MCF 10A (cell line): ENCODE measurements at regions of chr18 and their contacts with region 1.

Region 1: GRCh38 chr18:33231474-33232317 is 208.8 kb downstream of the CCDC178 start:
- DNase-seq: peak; percentile 81
- H3K4me3 Mint-ChIP-seq: no peak overlapping the region
- H3K27ac Mint-ChIP-seq: no peak overlapping the region
- H3K4me1 Mint-ChIP-seq: no peaks in the 10 kb centered on the region
- H3K27me3 Mint-ChIP-seq: peaks cover 13% of the 10 kb centered on the region
- CTCF ChIP-seq: peak; percentile 88

Region 2: DNA sequence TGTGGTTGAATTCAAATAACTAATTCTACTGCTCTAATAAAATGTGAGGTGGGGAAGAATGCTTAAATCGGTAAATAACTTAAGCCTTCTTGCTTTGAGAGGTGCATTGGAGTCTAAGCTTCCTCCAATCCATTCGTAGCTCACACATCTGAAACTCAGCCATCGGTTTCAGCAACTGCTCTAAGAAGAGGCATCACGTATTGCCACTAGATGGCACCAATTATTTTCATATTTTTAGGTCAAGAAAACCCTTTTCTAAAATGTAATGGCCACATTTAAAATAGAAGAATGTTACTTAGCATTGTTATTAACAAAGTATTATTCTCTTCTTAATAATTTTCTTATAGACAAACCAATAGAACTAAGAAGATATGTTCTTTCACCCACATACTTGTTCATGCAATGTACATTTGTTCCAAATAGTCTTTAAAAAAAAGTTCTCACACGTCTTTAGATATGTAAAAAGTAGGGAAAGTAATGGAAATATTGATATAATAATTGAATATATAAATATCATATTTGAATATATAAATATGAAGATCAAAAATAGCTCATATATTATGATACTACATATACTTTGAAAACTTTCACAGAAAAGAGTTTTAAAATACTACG is 21.0 kb before region 1 on chr18:
- CTCF ChIA-PET with region 1: interaction called, 27 read pairs
- POLR2A ChIA-PET with region 1: no interaction called
- intact Hi-C with region 1: no loop called
- DNase-seq: peak; percentile 45
- H3K4me3 Mint-ChIP-seq: no peak overlapping the region
- H3K27ac Mint-ChIP-seq: no peak overlapping the region
- H3K4me1 Mint-ChIP-seq: no peaks in the 10 kb centered on the region
- H3K27me3 Mint-ChIP-seq: peaks cover 60% of the 10 kb centered on the region
- CTCF ChIP-seq: peak; percentile 64

Region 3: GRCh38 chr18:33495278-33495677 is 263.6 kb after region 1 on chr18:
- CTCF ChIA-PET with region 1: interaction called, 4 read pairs
- POLR2A ChIA-PET with region 1: no interaction called
- intact Hi-C with region 1: loop called (anchors 1 kb)
- DNase-seq: peak; percentile 42
- H3K4me3 Mint-ChIP-seq: no peak overlapping the region
- H3K27ac Mint-ChIP-seq: no peak overlapping the region
- H3K4me1 Mint-ChIP-seq: no peaks in the 10 kb centered on the region
- H3K27me3 Mint-ChIP-seq: peaks cover 73% of the 10 kb centered on the region
- CTCF ChIP-seq: peak; percentile 27

Region 4: DNA sequence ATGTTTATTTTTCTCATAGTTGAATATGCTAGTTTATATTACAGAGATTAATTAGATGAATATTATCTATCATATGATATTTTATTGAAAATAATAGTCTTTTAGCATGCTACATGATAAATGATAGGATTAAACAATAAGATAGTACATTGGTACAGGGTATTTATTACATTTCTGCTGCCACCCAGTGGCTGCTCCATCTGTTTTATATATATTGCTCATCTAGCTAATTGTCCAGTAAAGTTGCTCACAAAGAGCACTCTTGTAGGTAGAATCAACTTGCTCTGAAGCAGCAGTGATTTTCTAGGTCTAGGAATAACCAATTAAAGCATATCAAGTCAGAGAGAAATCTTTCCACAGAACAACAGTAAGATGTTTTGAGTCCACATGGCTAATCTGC is 529.7 kb after region 1 on chr18:
- CTCF ChIA-PET with region 1: interaction called, 19 read pairs
- POLR2A ChIA-PET with region 1: no interaction called
- intact Hi-C with region 1: loop called (anchors 1 kb)
- DNase-seq: peak; percentile 22
- H3K4me3 Mint-ChIP-seq: no peak overlapping the region
- H3K27ac Mint-ChIP-seq: no peak overlapping the region
- H3K4me1 Mint-ChIP-seq: no peaks in the 10 kb centered on the region
- H3K27me3 Mint-ChIP-seq: no peaks in the 10 kb centered on the region
- CTCF ChIP-seq: peak; percentile 30